Caco-2 (cell line): ENCODE measurements at regions of chr5 and their contacts with region 1.

Region 1: DNA sequence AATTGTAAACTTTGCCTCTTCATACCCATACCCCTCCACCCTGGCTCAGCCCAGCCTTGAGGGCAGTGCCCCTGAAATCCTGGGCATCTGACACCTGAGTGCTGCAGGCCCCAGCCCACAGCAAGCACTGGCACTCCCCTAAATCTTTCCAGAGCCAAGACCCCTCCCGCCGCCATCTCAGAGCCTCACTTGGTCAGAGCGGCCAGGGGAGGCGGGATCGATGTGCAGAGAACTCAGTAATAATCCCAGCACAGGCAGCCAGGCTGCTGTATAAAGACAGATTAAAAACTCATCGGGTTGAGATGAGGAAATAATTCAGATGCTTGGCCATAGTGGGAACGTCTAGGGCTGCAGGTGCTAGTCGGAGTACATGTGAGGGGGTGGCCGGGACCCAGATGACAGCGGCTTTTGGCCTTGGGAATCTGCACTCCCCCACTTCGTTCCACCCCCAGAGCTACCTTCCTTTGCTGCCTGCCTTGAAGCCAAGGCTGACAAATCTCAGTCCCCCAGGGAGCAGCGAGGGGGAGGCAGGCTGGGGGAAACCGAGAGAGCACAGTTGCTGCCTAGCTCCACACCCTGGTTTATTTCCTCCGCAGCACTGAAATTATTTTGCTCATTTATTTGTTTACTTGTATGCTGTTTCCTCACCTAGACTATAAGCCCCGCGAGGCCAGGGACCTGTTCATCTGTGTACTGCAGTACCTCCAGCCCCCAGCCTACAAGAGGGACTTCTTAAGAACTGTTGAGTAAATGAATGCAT is 19.5 kb upstream of the ARAP3 start:
- DNase-seq: no peak
- H3K4me3 ChIP-seq: no peak overlapping the region
- H3K4me3 Mint-ChIP-seq: no peak overlapping the region
- H3K27ac Mint-ChIP-seq: no peak overlapping the region
- H3K4me1 ChIP-seq: peaks cover 15% of the 10 kb centered on the region
- H3K4me1 Mint-ChIP-seq: no peaks in the 10 kb centered on the region
- H3K27me3 ChIP-seq: peaks cover 1% of the 10 kb centered on the region; the same call in 1 of the 2 replicates
- H3K27me3 Mint-ChIP-seq: peaks cover 25% of the 10 kb centered on the region
- CTCF ChIP-seq: no peak

Region 2: DNA sequence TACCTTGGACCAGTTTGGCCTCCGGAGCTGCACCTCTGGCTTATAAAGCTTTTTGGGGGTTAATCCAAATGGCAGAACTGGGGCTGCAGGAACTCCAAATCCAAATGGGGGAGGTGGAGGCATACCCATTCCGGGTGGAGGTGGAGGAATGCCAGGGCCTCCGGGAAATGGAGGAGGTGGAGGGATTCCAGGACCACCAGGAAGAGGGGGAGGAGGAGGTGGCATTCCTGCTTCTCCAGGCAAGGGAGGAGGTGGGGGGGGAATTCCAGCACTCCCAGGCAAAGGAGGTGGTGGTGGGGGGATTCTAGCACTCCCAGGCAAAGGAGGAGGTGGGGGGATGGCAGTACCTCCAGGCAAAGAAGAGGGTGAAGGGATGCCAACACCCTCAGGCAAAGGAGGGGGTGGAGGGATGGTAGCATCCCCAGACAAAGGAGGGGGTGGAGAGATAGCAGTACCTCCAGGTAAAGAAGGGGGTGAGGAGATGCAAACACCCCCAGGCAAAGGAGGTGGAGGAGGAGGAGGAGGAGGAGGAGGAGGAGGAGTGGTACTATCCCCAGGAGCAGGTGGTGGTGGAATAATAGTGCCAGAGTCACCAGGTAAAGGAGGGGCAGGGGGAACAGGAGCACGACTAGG is 127.9 kb before region 1 on chr5:
- CTCF ChIA-PET with region 1: no interaction called
- POLR2A ChIA-PET with region 1: no interaction called
- intact Hi-C with region 1: no loop called
- DNase-seq: no peak
- H3K4me3 ChIP-seq: no peak overlapping the region
- H3K4me3 Mint-ChIP-seq: no peak overlapping the region
- H3K27ac Mint-ChIP-seq: no peak overlapping the region
- H3K4me1 ChIP-seq: no peaks in the 10 kb centered on the region
- H3K4me1 Mint-ChIP-seq: no peaks in the 10 kb centered on the region
- H3K27me3 ChIP-seq: no peaks in the 10 kb centered on the region
- H3K27me3 Mint-ChIP-seq: no peaks in the 10 kb centered on the region
- CTCF ChIP-seq: no peak

Region 3: GRCh38 chr5:141713616-141714309 is 12.2 kb after region 1 on chr5:
- CTCF ChIA-PET with region 1: no interaction called
- POLR2A ChIA-PET with region 1: no interaction called
- intact Hi-C with region 1: loop called (anchors 1 kb)
- DNase-seq: peak; percentile 74 to 90
- H3K4me3 ChIP-seq: no peak overlapping the region
- H3K4me3 Mint-ChIP-seq: peak overlapping the region; percentile 46
- H3K27ac Mint-ChIP-seq: peak overlapping the region; percentile 38
- H3K4me1 ChIP-seq: peaks cover 40% of the 10 kb centered on the region
- H3K4me1 Mint-ChIP-seq: peaks cover 28% of the 10 kb centered on the region
- H3K27me3 ChIP-seq: no peaks in the 10 kb centered on the region
- H3K27me3 Mint-ChIP-seq: no peaks in the 10 kb centered on the region
- CTCF ChIP-seq: no peak

Region 4: DNA sequence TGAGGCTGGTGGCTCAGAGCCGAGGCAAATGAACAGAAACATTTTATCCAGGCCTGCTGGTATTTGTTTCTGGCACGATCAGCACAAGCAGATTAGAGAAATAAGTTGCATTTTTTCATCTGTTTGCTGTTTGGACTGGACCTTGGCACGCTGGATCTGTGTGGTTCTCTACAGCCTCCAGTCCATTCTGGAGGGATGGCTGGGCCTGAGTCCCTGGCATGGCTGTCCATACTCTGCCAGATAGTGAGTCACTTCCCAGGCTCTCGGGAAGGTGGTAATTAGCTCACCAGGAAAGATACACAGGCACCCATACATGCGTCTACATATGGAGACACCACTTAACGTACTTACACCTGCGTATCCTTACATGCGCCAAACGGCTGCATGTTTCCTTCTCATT is 544.7 kb after region 1 on chr5:
- CTCF ChIA-PET with region 1: no interaction called
- POLR2A ChIA-PET with region 1: no interaction called
- intact Hi-C with region 1: no loop called
- DNase-seq: no peak
- H3K4me3 ChIP-seq: no peak overlapping the region
- H3K4me3 Mint-ChIP-seq: no peak overlapping the region
- H3K27ac Mint-ChIP-seq: no peak overlapping the region
- H3K4me1 ChIP-seq: peaks cover 9% of the 10 kb centered on the region; the same call in 1 of the 2 replicates
- H3K4me1 Mint-ChIP-seq: peaks cover 5% of the 10 kb centered on the region
- H3K27me3 ChIP-seq: no peaks in the 10 kb centered on the region
- H3K27me3 Mint-ChIP-seq: no peaks in the 10 kb centered on the region
- CTCF ChIP-seq: no peak